Activated CD4-positive, alpha-beta memory T cell treated with anti-CD3 and anti-CD28 coated beads for 36 hours (primary cell): ENCODE measurements at regions of chr4 and their contacts with region 1.

Region 1: GRCh38 chr4:39469429-39470077 is 10.7 kb downstream of the LIAS start:
- DNase-seq: peak; percentile 12
- H3K4me3 Mint-ChIP-seq: no peak overlapping the region
- H3K27ac Mint-ChIP-seq: no peak overlapping the region
- H3K4me1 Mint-ChIP-seq: peaks cover 9% of the 10 kb centered on the region
- H3K27me3 Mint-ChIP-seq: no peaks in the 10 kb centered on the region

Region 2: DNA sequence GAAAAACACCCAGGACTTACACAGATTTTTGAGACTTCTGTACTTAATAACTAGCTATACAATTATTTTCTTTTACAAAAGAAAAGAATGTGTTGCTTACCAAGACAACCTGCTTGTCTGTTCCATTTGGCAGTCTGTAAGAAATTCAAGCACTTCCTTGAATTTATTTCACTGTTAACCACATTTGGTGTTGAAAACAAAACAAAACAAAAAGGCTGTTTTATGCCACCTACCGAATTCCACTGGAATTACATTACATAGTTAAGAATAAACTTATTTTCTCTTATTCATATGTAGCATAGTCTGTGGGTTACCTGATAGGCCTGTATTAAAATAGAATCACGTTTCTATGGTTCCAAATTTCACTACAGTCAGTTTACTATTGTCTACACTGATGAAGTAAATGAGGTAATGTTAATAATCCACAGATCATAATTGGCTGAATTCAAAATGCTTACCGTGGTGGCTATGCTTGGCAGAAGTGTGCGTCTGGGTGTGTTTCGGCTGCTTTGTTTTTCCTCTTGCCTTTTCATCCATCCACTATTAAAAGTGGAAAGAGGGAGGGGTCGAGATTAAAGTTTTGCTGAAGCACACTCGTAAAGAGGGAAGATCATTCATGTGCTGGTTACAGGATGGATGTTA is 664.8 kb before region 1 on chr4 and contains the start of gene TLR1:
- CTCF ChIA-PET with region 1: no interaction called
- POLR2A ChIA-PET with region 1: no interaction called
- intact Hi-C with region 1: no loop called
- DNase-seq: peak; percentile 24
- H3K4me3 Mint-ChIP-seq: peak within 1 kb of the TSS; percentile 76
- H3K27ac Mint-ChIP-seq: peak within 1 kb of the TSS; percentile 91
- H3K4me1 Mint-ChIP-seq: peaks cover 35% of the 10 kb centered on the region
- H3K27me3 Mint-ChIP-seq: no peaks in the 10 kb centered on the region
- total RNA-seq, gene TLR1: 1.5 to 1.8 TPM

Region 3: DNA sequence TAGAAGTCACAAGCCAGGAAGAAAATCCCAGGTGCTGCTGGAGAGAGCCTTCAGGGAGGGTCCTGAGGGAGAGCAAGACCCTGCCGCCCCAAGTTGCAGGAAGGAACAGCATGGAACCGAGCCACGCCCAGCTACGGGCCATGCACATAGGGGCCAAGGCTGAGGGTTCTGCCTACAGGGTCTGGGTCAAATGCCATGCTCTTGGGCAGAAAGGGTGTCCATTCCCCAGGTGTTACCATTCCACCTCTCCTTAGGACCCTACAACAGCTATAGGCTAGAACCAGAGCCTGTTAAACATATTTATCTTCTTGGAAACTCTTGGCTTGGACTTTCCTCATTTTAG is 33.4 kb before region 1 on chr4:
- CTCF ChIA-PET with region 1: no interaction called
- POLR2A ChIA-PET with region 1: no interaction called
- intact Hi-C with region 1: no loop called
- DNase-seq: no peak
- H3K4me3 Mint-ChIP-seq: no peak overlapping the region
- H3K27ac Mint-ChIP-seq: no peak overlapping the region
- H3K4me1 Mint-ChIP-seq: no peaks in the 10 kb centered on the region
- H3K27me3 Mint-ChIP-seq: peaks cover 2% of the 10 kb centered on the region

Region 4: DNA sequence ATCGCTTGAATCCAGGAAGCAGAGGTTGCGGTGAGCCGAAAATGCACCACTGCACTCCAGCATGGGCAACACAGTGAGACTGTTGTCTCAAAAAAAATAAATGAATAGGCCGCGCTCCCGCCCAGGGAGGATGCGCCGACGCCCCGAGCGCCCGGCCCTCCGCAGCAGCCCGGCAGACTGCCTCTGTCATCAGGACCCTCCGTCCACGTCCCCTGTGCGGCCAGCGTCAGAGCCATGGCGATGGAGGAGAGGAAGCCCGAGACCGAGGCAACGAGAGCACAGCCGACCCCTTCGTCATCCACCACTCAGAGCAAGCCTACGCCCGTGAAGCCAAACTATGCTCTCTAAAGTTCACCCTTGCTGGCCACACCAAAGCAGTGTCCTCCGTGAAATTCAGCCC is 10.7 kb after region 1 on chr4:
- CTCF ChIA-PET with region 1: interaction called, 10 read pairs
- POLR2A ChIA-PET with region 1: no interaction called
- intact Hi-C with region 1: no loop called
- DNase-seq: no peak
- H3K4me3 Mint-ChIP-seq: no peak overlapping the region
- H3K27ac Mint-ChIP-seq: no peak overlapping the region
- H3K4me1 Mint-ChIP-seq: no peaks in the 10 kb centered on the region
- H3K27me3 Mint-ChIP-seq: no peaks in the 10 kb centered on the region

Region 5: DNA sequence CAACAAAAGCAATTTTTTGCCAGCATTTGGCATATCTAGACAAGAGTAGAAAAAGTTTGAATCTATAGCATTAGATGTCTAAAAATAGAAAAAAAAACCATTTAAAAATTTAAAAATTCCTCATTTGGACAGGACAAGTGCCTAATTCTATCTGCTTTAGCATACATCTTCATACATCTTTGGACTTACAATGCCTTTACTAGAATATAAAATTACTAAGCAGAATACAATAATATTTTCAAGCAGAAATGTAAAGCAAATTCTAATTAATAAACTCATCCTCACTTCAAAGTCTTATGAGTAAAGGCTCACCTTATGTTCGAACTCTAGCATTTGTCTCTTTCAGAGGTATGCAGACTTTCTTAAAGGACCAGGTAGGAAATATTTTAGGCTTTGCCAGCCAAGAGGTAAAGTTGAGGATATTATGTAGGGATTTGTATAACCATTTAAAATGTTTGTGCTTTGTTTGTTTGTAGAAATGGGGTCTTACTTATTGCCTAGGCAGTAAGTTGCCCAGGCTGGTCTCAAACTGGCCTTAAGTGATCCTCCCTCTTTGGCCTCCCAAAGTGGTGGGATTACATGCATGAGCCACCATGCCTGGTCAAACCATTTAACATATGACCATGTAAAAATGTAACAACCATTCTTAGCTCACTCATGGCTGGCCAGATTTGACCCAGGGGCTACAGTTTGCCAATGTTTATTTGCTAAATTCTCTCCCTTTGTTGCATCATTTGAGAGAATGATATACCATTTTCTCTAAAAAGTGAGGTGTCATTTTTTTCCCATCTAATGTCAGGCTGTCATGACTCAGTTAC is 28.6 kb after region 1 on chr4:
- CTCF ChIA-PET with region 1: no interaction called
- POLR2A ChIA-PET with region 1: no interaction called
- intact Hi-C with region 1: no loop called
- DNase-seq: no peak
- H3K4me3 Mint-ChIP-seq: no peak overlapping the region
- H3K27ac Mint-ChIP-seq: no peak overlapping the region
- H3K4me1 Mint-ChIP-seq: no peaks in the 10 kb centered on the region
- H3K27me3 Mint-ChIP-seq: no peaks in the 10 kb centered on the region

Region 6: DNA sequence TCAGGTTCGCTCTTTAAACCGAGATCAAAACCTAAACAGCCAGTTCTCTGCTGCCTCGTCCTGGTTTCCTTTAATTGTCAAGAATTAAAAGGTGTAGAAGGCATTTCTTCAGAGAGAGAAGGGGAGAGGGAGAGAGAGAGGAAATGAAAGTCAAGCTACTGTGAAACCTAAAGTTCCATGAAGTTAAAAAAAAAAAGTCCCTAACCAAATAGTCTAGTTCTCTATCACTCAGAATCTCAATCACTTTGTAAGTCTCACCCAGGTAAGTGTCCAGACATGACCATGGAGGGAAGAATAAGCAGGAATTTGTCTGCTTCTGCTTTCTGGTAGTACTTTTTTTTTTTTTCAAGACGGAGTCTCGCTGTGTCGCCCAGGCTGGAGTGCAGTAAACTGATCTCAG is 187.9 kb after region 1 on chr4:
- CTCF ChIA-PET with region 1: interaction called, 7 read pairs
- POLR2A ChIA-PET with region 1: no interaction called
- intact Hi-C with region 1: loop called (anchors 2 kb)
- DNase-seq: no peak
- H3K4me3 Mint-ChIP-seq: no peak overlapping the region
- H3K27ac Mint-ChIP-seq: no peak overlapping the region
- H3K4me1 Mint-ChIP-seq: peaks cover 5% of the 10 kb centered on the region
- H3K27me3 Mint-ChIP-seq: no peaks in the 10 kb centered on the region